Activated CD8-positive, alpha-beta T cell treated with anti-CD3 and anti-CD28 coated beads, Interleukin-2, amount 10 ng/mL, durations not matched to agents 7 days and 5 days (primary cell): ENCODE measurements at regions of chr17 and their contacts with region 1.

Region 1: GRCh38 chr17:4903051-4903818 is at the start of gene CHRNE:
- DNase-seq: peak; percentile 87
- ATAC-seq: peak; percentile 45
- H3K4me3 Mint-ChIP-seq: peak within 1 kb of the TSS; percentile 12
- H3K27ac Mint-ChIP-seq: peak within 1 kb of the TSS; percentile 46
- H3K4me1 Mint-ChIP-seq: peaks cover 38% of the 10 kb centered on the region
- H3K27me3 Mint-ChIP-seq: peaks cover 13% of the 10 kb centered on the region
- total RNA-seq, gene CHRNE: 0.26 to 0.45 TPM

Region 2: DNA sequence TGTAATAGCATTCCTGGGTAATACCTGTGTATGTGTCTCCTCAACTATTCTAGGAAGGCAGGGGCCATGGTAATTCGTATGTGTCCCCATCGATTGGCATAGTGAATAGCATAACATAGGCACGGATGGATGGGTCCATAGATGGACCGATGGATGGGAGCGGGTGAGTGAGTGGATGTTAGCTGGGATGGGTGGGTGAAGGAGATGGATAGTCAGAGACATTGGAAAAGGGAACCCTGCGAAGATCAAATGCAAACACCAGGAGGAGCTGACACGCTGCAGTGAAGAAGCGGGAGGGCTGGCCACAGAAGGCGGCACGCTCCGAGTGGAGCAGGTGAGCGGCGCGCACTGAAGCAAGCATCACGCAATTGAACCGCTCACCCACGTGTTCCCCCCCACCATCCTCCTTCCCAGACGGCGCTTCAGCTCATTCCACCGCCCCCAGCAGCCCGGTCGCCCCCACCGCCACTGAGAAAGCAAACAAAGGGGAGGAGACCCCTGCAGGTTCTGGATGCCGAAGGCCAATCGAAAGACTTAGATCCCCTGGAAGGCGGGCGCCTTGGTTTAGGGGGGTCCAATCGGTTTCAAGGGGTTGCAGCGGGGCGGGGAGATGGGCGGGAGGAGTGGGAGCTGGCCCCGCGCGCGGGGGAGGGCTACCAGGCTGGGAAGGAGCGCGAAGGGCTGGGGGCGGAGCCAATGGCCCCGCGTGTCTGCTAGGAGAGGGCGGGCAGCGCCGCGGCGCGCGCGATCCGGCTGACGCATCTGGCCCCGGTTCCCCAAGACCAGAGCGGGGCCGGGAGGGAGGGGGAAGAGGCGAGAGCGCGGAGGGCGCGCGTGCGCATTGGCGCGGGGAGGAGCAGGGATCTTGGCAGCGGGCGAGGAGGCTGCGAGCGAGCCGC is 193.2 kb before region 1 on chr17 and contains the start of gene ARRB2:
- CTCF ChIA-PET with region 1: interaction called, 14 read pairs
- POLR2A ChIA-PET with region 1: no interaction called
- DNase-seq: peak; percentile 100
- ATAC-seq: peak; percentile 87
- H3K4me3 Mint-ChIP-seq: peak within 1 kb of the TSS; percentile 94
- H3K27ac Mint-ChIP-seq: peak within 1 kb of the TSS; percentile 96
- H3K4me1 Mint-ChIP-seq: peaks cover 66% of the 10 kb centered on the region
- H3K27me3 Mint-ChIP-seq: no peaks in the 10 kb centered on the region
- total RNA-seq, gene ARRB2: 302 to 316 TPM

Region 3: DNA sequence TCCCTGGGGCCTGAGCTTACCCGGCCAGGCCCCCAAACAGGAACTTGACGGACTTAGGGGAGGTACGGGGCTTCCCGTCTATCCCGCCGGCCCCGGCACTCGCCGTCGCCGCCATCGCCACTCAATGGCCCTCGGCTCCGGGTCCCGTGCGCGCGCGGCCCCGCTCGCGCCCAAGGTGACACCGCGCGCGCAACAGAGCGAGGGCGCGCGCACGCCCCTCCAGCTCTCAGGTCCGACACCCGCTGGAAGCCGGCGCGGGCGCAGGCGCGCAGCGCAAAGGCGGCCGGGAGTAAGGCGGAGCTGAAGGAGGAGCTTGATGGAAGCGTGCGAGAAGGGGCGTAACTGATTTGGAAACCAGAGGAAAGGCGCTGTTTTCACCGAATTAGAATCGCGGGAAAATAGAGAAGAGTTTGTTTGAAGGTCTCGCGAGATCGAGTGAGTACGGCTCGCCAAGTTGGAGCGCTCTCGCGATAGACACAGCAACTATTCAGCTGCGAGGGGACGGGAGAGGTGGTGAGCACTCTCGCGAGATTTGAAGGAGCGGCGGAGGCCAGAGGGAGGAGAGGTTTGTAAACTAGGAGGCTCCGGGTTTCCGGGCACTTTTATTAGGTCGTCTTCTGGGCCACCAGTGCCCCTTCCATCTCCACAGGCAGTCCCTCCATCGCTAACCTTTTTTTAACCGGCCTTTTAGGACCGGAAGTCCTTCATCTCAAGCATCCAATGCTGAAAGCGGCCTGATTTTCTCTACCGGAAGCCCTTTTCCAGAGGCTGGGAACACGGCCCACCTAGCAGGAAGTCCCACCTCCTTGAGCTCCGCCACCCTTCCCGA is 36.8 kb after region 1 on chr17 and contains the starts of genes RNF167 and SLC25A11:
- CTCF ChIA-PET with region 1: interaction called, 11 read pairs
- POLR2A ChIA-PET with region 1: interaction called, 13 read pairs
- DNase-seq: peak; percentile 99
- ATAC-seq: peak; percentile 83
- H3K4me3 Mint-ChIP-seq: peak within 1 kb of the TSS; percentile 97
- H3K27ac Mint-ChIP-seq: peak within 1 kb of the TSS; percentile 88
- H3K4me1 Mint-ChIP-seq: peaks cover 67% of the 10 kb centered on the region
- H3K27me3 Mint-ChIP-seq: no peaks in the 10 kb centered on the region
- total RNA-seq, gene RNF167: 239 to 245 TPM
- total RNA-seq, gene SLC25A11: 78.5 to 86.4 TPM